ENCODE measurements at regions of chr7 and their contacts with region 1.

Region 1: GRCh38 chr7:81499262-81500116 is 270.4 kb downstream of the HGF start:
- DNase-seq: peak; percentile 73 to 90 (median 81)
- H3K4me3 ChIP-seq: no peak overlapping the region
- H3K27ac ChIP-seq: no peak overlapping the region
- H3K4me1 ChIP-seq: no peaks in the 10 kb centered on the region
- H3K27me3 ChIP-seq: no peaks in the 10 kb centered on the region

Region 2: GRCh38 chr7:81482600-81483186 is 16.8 kb before region 1 on chr7:
- CTCF ChIA-PET with region 1: interaction called, 18 read pairs
- POLR2A ChIA-PET with region 1: no interaction called
- DNase-seq: peak; percentile 28 to 63 (median 63)
- H3K4me3 ChIP-seq: no peak overlapping the region
- H3K27ac ChIP-seq: no peak overlapping the region
- H3K4me1 ChIP-seq: no peaks in the 10 kb centered on the region
- H3K27me3 ChIP-seq: no peaks in the 10 kb centered on the region

Region 3: DNA sequence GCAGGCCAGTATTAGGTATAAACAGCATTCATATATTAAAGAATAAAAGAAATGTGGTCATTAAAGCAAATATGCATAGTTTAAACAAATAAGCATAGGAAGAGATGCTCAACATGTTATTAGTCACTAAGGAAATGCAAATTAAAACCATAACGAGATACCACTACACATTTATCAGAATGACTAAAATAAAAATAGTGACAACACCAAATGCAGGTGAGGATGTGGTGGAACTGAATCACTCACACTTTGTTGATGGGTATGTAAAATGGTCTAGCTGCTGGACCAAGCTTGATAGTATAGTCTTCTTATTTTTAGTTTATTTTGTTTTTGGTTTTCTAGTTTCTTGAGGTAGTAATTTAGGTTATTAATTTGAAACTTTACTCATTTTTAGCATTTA is 27.5 kb after region 1 on chr7:
- CTCF ChIA-PET with region 1: no interaction called
- POLR2A ChIA-PET with region 1: no interaction called
- DNase-seq: no peak
- H3K4me3 ChIP-seq: no peak overlapping the region
- H3K27ac ChIP-seq: no peak overlapping the region
- H3K4me1 ChIP-seq: no peaks in the 10 kb centered on the region
- H3K27me3 ChIP-seq: no peaks in the 10 kb centered on the region

Region 4: GRCh38 chr7:81956520-81956919 is 457.0 kb after region 1 on chr7:
- CTCF ChIA-PET with region 1: interaction called, 85 read pairs
- POLR2A ChIA-PET with region 1: interaction called, 3 read pairs
- DNase-seq: peak; percentile 59 to 84 (median 80)
- H3K4me3 ChIP-seq: no peak overlapping the region
- H3K27ac ChIP-seq: no peak overlapping the region
- H3K4me1 ChIP-seq: no peaks in the 10 kb centered on the region
- H3K27me3 ChIP-seq: no peaks in the 10 kb centered on the region

Region 5: GRCh38 chr7:82017334-82017943 is 518.0 kb after region 1 on chr7:
- CTCF ChIA-PET with region 1: interaction called, 49 read pairs
- POLR2A ChIA-PET with region 1: no interaction called
- DNase-seq: peak; percentile 14 to 40 (median 24)
- H3K4me3 ChIP-seq: no peak overlapping the region
- H3K27ac ChIP-seq: no peak overlapping the region
- H3K4me1 ChIP-seq: no peaks in the 10 kb centered on the region
- H3K27me3 ChIP-seq: no peaks in the 10 kb centered on the region

Region 6: GRCh38 chr7:82044497-82045080 is 545.1 kb after region 1 on chr7:
- CTCF ChIA-PET with region 1: interaction called, 12 read pairs
- POLR2A ChIA-PET with region 1: no interaction called
- DNase-seq: peak; percentile 50 to 74 (median 70)
- H3K4me3 ChIP-seq: no peak overlapping the region
- H3K27ac ChIP-seq: no peak overlapping the region
- H3K4me1 ChIP-seq: peaks cover 0 to 3% (median 0%) of the 10 kb centered on the region in 4 experiments
- H3K27me3 ChIP-seq: no peaks in the 10 kb centered on the region

Measured in common myeloid progenitor, CD34-positive (primary cell).